Heart right ventricle (tissue), 16 donors: ENCODE measurements at regions of chrX and their contacts with region 1.

Region 1: GRCh38 chrX:18210470-18210869 is 10.2 kb downstream of the BEND2 start:
- DNase-seq: no peak
- ATAC-seq: no peak
- H3K4me3 ChIP-seq: no peak overlapping the region
- H3K27ac ChIP-seq: no peak overlapping the region
- H3K4me1 ChIP-seq: no peaks in the 10 kb centered on the region
- H3K27me3 ChIP-seq: peaks cover 0 to 6% (median 0%) of the 10 kb centered on the region in 7 donors
- CTCF ChIP-seq: peak in 7 of 9 donors; percentile 25 to 54 (median 36)

Region 2: DNA sequence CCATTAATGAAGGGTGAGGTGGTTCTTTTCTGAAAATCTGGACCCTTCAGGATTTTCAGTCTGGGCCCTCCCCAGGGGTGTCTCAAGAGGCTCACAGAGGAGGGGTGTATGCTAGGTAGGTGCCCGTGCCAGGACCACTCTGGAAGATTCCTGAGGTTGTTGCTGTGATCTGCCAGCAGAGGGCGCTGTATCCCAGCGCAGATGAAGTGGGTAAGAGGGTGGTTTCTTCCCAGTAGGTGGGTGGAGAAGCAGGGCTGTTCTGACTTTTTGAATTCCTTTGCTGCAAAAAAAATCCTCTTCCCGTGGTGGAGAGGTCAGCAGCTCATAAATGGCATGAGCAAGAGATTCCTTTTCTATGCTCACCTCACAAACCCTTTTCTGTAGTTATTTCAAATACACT is 422.0 kb before region 1 on chrX:
- intact Hi-C with region 1: loop called in 2 of 10 experiments (anchors 2 to 5 kb)
- DNase-seq: peak; percentile 11 to 19
- ATAC-seq: peak; percentile 46 to 84 (median 69)
- H3K4me3 ChIP-seq: no peak overlapping the region
- H3K27ac ChIP-seq: no peak overlapping the region
- H3K4me1 ChIP-seq: peaks cover 0 to 7% (median 0%) of the 10 kb centered on the region in 9 donors
- H3K27me3 ChIP-seq: peaks cover 0 to 17% (median 0%) of the 10 kb centered on the region in 7 donors
- CTCF ChIP-seq: peak; percentile 61 to 80 (median 74)

Region 3: DNA sequence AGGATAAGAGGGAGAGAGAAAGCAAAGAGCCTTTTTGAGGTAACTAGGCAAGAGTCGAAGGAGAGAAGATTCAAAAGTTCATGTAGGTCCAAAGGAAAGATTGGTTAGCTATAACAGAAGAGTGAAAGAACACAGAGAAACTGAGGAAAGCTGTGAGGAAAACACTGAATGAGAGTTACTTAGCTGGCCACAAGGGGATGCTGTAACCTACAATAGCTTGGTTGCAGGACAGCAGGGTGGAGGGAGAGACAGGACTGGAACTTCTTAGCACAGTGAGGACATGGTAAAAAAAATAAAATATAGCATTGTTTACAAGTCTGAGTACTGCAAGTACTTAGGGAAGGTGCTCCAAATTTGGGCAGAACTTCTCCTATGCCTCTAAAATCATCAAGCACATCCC is 397.7 kb before region 1 on chrX:
- intact Hi-C with region 1: loop called in 1 of 10 experiments (anchors 5 kb)
- DNase-seq: no peak
- ATAC-seq: peak in 2 of 8 donors; percentile 58 to 63
- H3K4me3 ChIP-seq: no peak overlapping the region
- H3K27ac ChIP-seq: no peak overlapping the region
- H3K4me1 ChIP-seq: peaks cover 0 to 22% (median 0%) of the 10 kb centered on the region in 9 donors
- H3K27me3 ChIP-seq: no peaks in the 10 kb centered on the region
- CTCF ChIP-seq: peak; percentile 16 to 73 (median 58)

Region 4: DNA sequence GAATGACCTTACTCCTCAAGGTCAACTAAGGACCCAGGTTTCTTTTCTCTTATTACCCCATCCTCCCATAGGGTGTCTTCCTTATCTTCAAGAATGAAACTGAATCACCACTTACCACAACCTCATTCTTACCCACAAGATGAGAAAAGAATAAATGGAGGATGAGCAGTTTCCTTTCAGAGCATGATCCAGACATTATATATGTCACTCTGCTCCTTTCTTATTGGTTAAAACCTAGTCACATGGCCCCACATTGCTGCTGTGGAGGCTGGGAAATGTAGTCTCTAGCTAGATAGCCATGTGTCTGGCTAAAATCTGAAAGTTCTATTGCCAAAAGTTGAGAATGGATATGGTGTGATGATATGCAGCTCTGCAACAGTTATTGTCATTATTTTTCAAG is 286.9 kb before region 1 on chrX:
- intact Hi-C with region 1: loop called in 1 of 10 experiments (anchors 5 kb)
- DNase-seq: no peak
- ATAC-seq: no peak
- H3K4me3 ChIP-seq: no peak overlapping the region
- H3K27ac ChIP-seq: no peak overlapping the region
- H3K4me1 ChIP-seq: no peaks in the 10 kb centered on the region
- H3K27me3 ChIP-seq: peaks cover 0 to 12% (median 0%) of the 10 kb centered on the region in 7 donors
- CTCF ChIP-seq: no peak

Region 5: DNA sequence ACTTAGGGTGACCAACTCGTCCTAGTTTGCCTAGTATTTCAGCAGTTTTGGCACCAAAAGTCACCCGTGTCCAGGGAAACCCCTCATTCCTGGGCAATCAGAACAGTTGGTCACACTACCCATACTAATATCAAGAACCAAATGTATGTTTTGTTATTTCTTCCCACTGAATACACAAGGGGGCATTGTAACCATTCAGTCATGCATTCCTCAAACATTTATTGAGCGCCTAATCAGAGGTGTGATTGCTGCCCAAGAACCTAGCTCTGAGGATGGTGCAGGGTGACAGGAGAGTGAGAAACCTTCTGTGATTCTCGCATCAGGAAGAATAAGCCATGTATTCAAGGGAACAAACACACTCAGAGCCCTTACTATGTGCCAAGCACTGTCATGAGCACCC is 279.6 kb before region 1 on chrX:
- intact Hi-C with region 1: loop called in 2 of 10 experiments (anchors 5 to 10 kb)
- DNase-seq: no peak
- ATAC-seq: no peak
- H3K4me3 ChIP-seq: no peak overlapping the region
- H3K27ac ChIP-seq: no peak overlapping the region
- H3K4me1 ChIP-seq: no peaks in the 10 kb centered on the region
- H3K27me3 ChIP-seq: peaks cover 0 to 10% (median 0%) of the 10 kb centered on the region in 7 donors
- CTCF ChIP-seq: peak in 2 of 9 donors; percentile 7 to 18